Transverse colon (tissue), 4 donors: ENCODE measurements at regions of chr17 and their contacts with region 1.

Region 1: GRCh38 chr17:3636154-3636907 is at the starts of genes CTNS and SHPK:
- DNase-seq: peak; percentile 97
- H3K4me3 ChIP-seq: peak within 1 kb of the TSS; percentile 81 to 87 (median 84)
- H3K27ac ChIP-seq: peak within 1 kb of the TSS; percentile 94 to 96 (median 96)
- H3K4me1 ChIP-seq: peaks cover 7 to 25% (median 15%) of the 10 kb centered on the region in 4 donors
- H3K27me3 ChIP-seq: no peaks in the 10 kb centered on the region
- CTCF ChIP-seq: peak in 1 of 5 experiments; percentile 22
- EP300 ChIP-seq: no peak
- POLR2A ChIP-seq: peak; percentile 77
- total RNA-seq, gene CTNS: 1.2 to 25.7 (median 18.8) TPM
- total RNA-seq, gene SHPK: 9.0 to 50.9 (median 24.2) TPM

Region 2: GRCh38 chr17:3048767-3049471 is 587.4 kb before region 1 on chr17:
- in situ Hi-C with region 1: loop called in 3 of 4 experiments (anchors 25 kb)
- intact Hi-C with region 1: no loop called
- DNase-seq: peak; percentile 96
- H3K4me3 ChIP-seq: peak overlapping the region; percentile 47 to 81 (median 58)
- H3K27ac ChIP-seq: peak overlapping the region; percentile 38 to 81 (median 69)
- H3K4me1 ChIP-seq: peaks cover 4 to 10% (median 4%) of the 10 kb centered on the region in 4 donors
- H3K27me3 ChIP-seq: no peaks in the 10 kb centered on the region
- CTCF ChIP-seq: peak; percentile 52 to 86 (median 72)
- EP300 ChIP-seq: no peak
- POLR2A ChIP-seq: peak; percentile 20

Region 3: GRCh38 chr17:4074831-4075495 is 438.6 kb after region 1 on chr17:
- in situ Hi-C with region 1: no loop called
- intact Hi-C with region 1: no loop called
- DNase-seq: no peak
- H3K4me3 ChIP-seq: no peak overlapping the region
- H3K27ac ChIP-seq: peak overlapping the region in 3 of 4 donors; percentile 10 to 62 (median 16)
- H3K4me1 ChIP-seq: peaks cover 0 to 6% (median 2%) of the 10 kb centered on the region in 4 donors
- H3K27me3 ChIP-seq: no peaks in the 10 kb centered on the region
- CTCF ChIP-seq: peak; percentile 54 to 57 (median 55)
- EP300 ChIP-seq: no peak
- POLR2A ChIP-seq: no peak